CD4-positive, alpha-beta T cell (primary cell): ENCODE measurements at regions of chr3 and their contacts with region 1.

Region 1: GRCh38 chr3:179071550-179072397 is at the start of gene ZMAT3:
- DNase-seq: peak; percentile 72 to 94 (median 81)
- ATAC-seq: peak; percentile 81
- H3K4me3 ChIP-seq: peak within 1 kb of the TSS; percentile 78
- H3K4me3 Mint-ChIP-seq: peak within 1 kb of the TSS; percentile 99
- H3K27ac ChIP-seq: peak within 1 kb of the TSS; percentile 76 to 92
- H3K27ac Mint-ChIP-seq: peak within 1 kb of the TSS; percentile 86
- H3K4me1 ChIP-seq: peaks cover 30% of the 10 kb centered on the region
- H3K4me1 Mint-ChIP-seq: peaks cover 69% of the 10 kb centered on the region
- H3K27me3 ChIP-seq: no peaks in the 10 kb centered on the region
- H3K27me3 Mint-ChIP-seq: no peaks in the 10 kb centered on the region
- CTCF ChIP-seq: no peak
- total RNA-seq, gene ZMAT3: 10.2 to 13.0 TPM

Region 2: DNA sequence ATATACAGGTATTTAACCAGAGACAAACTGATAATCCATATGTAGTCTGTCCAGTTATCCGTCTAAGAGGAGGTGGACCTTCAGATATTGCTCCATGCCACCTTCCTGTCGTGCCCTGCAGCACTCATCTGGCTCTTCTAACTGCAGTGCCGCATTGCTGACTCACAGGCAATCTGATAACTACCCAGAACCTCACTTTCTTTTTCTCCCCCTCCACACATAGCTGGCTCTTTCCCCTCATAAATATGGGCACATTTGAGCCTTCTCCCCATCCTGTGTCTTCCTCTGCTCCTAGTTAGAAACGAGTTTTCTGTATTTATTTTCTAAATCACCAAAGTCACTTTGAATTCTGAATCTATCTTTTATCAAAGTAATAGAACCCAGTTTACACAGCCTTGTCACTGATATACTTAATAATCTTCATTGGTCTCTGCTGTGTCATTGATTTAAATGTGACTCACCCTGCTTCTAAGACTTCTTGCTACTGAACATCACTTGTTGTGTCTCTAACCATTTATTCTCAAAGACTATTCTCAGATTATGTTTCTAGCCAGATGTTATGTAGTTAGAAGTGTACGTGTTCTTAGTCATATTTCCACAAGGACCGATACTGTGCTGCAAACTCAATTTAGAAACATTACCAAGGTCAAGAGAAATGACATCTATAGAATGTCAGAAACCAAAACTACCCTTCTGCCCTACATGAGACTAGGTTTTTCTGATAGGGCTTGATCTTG is 552.9 kb before region 1 on chr3:
- CTCF ChIA-PET with region 1: no interaction called
- POLR2A ChIA-PET with region 1: no interaction called
- intact Hi-C with region 1: no loop called
- DNase-seq: no peak
- ATAC-seq: no peak
- H3K4me3 ChIP-seq: no peak overlapping the region
- H3K4me3 Mint-ChIP-seq: no peak overlapping the region
- H3K27ac ChIP-seq: no peak overlapping the region
- H3K27ac Mint-ChIP-seq: no peak overlapping the region
- H3K4me1 ChIP-seq: no peaks in the 10 kb centered on the region
- H3K4me1 Mint-ChIP-seq: no peaks in the 10 kb centered on the region
- H3K27me3 ChIP-seq: no peaks in the 10 kb centered on the region
- H3K27me3 Mint-ChIP-seq: peaks cover 13% of the 10 kb centered on the region
- CTCF ChIP-seq: no peak

Region 3: DNA sequence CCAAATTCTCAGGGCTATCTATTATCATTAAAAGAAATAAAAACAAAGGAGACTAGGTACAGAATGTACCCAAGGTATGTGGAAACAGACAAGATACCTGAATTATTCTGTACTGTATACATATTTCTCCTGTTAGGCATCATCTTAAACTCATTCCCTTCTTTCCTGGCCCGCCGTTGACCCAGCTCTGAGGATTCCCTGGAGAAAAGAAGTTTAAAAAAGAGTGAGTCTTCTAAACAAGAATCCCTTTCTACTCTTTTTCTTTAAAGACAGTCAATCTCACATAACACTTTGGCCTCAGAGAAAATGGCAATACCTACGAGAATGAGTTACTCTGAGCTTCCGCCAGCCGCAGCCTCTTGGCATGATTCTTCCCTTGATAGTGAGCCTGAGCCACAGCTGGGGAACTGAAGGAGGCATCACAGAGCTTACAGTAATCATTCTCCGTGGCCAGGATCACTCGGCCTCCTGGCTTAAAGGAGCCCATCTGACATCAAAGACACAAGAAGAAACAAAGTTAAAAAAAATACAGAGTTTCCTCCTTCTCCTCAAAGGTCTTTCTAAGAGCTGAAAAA is 44.4 kb before region 1 on chr3:
- CTCF ChIA-PET with region 1: no interaction called
- POLR2A ChIA-PET with region 1: interaction called, 31 read pairs
- intact Hi-C with region 1: no loop called
- DNase-seq: peak in 6 of 14 experiments; percentile 6 to 45 (median 32)
- ATAC-seq: peak; percentile 77
- H3K4me3 ChIP-seq: no peak overlapping the region
- H3K4me3 Mint-ChIP-seq: peak overlapping the region; percentile 71
- H3K27ac ChIP-seq: peak overlapping the region; percentile 13 to 44
- H3K27ac Mint-ChIP-seq: peak overlapping the region; percentile 87
- H3K4me1 ChIP-seq: peaks cover 9% of the 10 kb centered on the region
- H3K4me1 Mint-ChIP-seq: peaks cover 28% of the 10 kb centered on the region
- H3K27me3 ChIP-seq: no peaks in the 10 kb centered on the region
- H3K27me3 Mint-ChIP-seq: no peaks in the 10 kb centered on the region
- CTCF ChIP-seq: no peak

Region 4: DNA sequence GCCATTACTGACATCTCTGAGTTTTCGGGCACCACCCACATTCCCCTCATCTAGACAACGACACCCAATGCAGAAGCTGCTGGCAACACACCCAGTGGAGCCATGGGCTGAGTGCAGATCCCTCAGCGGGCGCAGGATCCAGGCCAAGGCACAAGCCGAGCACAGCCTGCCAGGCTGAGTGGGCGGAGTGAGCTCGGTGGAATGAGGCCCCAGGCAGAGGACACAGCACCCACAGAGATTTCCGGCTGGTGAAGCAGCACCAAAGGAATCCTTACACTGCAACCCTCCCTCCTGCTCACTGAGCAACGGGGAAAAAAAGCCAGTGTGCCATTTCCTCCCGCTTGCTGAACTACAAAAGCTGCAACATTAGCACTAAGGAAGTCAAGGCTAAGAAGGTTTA is 34.4 kb before region 1 on chr3:
- CTCF ChIA-PET with region 1: no interaction called
- POLR2A ChIA-PET with region 1: interaction called, 40 read pairs
- intact Hi-C with region 1: loop called (anchors 5 kb)
- DNase-seq: peak; percentile 27 to 78 (median 55)
- ATAC-seq: peak; percentile 95
- H3K4me3 ChIP-seq: peak overlapping the region; percentile 28
- H3K4me3 Mint-ChIP-seq: peak overlapping the region; percentile 73
- H3K27ac ChIP-seq: peak overlapping the region; percentile 47 to 63
- H3K27ac Mint-ChIP-seq: no peak overlapping the region
- H3K4me1 ChIP-seq: peaks cover 28% of the 10 kb centered on the region
- H3K4me1 Mint-ChIP-seq: peaks cover 12% of the 10 kb centered on the region
- H3K27me3 ChIP-seq: no peaks in the 10 kb centered on the region
- H3K27me3 Mint-ChIP-seq: no peaks in the 10 kb centered on the region
- CTCF ChIP-seq: no peak

Region 5: DNA sequence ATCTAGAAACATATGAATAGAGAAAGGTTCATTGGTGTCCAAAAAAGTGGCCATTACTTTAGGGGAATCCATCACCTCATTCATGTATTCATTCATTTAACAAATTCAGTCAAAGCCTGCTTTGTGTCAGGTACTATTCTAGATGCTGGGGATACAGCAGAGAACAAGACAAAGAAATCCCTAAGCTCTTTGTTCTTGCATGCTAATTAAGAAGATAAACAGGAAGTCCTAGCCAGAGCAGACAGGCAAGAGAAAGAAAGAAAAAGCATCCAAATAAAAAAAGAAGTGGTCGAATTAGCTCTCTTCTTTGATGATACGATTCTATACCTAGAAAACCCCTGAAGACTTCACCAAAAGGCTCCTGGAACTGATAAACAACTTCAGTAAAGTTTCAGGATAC is 12.2 kb after region 1 on chr3:
- CTCF ChIA-PET with region 1: no interaction called
- POLR2A ChIA-PET with region 1: interaction called, 10 read pairs
- intact Hi-C with region 1: no loop called
- DNase-seq: peak in 1 of 14 experiments; percentile 29
- ATAC-seq: no peak
- H3K4me3 ChIP-seq: no peak overlapping the region
- H3K4me3 Mint-ChIP-seq: no peak overlapping the region
- H3K27ac ChIP-seq: no peak overlapping the region
- H3K27ac Mint-ChIP-seq: peak overlapping the region; percentile 3
- H3K4me1 ChIP-seq: no peaks in the 10 kb centered on the region
- H3K4me1 Mint-ChIP-seq: peaks cover 10% of the 10 kb centered on the region
- H3K27me3 ChIP-seq: no peaks in the 10 kb centered on the region
- H3K27me3 Mint-ChIP-seq: no peaks in the 10 kb centered on the region
- CTCF ChIP-seq: no peak

Region 6: GRCh38 chr3:179258820-179259219 is 187.0 kb after region 1 on chr3:
- CTCF ChIA-PET with region 1: no interaction called
- POLR2A ChIA-PET with region 1: no interaction called
- intact Hi-C with region 1: no loop called
- DNase-seq: no peak
- ATAC-seq: no peak
- H3K4me3 ChIP-seq: no peak overlapping the region
- H3K4me3 Mint-ChIP-seq: no peak overlapping the region
- H3K27ac ChIP-seq: no peak overlapping the region
- H3K27ac Mint-ChIP-seq: no peak overlapping the region
- H3K4me1 ChIP-seq: peaks cover 12% of the 10 kb centered on the region
- H3K4me1 Mint-ChIP-seq: peaks cover 12% of the 10 kb centered on the region
- H3K27me3 ChIP-seq: no peaks in the 10 kb centered on the region
- H3K27me3 Mint-ChIP-seq: no peaks in the 10 kb centered on the region
- CTCF ChIP-seq: no peak